Right cardiac atrium (tissue), 5 donors: ENCODE measurements at regions of chr4 and their contacts with region 1.

Region 1: GRCh38 chr4:47463235-47463956 is at the start of gene COMMD8:
- DNase-seq: peak; percentile 98 to 99 (median 98)
- ATAC-seq: peak; percentile 99 to 100
- H3K4me3 ChIP-seq: peak within 1 kb of the TSS; percentile 80
- H3K27ac ChIP-seq: peak within 1 kb of the TSS; percentile 69
- H3K4me1 ChIP-seq: no peaks in the 10 kb centered on the region
- H3K27me3 ChIP-seq: no peaks in the 10 kb centered on the region
- total RNA-seq, gene COMMD8: 13.9 to 20.0 (median 15.6) TPM

Region 2: DNA sequence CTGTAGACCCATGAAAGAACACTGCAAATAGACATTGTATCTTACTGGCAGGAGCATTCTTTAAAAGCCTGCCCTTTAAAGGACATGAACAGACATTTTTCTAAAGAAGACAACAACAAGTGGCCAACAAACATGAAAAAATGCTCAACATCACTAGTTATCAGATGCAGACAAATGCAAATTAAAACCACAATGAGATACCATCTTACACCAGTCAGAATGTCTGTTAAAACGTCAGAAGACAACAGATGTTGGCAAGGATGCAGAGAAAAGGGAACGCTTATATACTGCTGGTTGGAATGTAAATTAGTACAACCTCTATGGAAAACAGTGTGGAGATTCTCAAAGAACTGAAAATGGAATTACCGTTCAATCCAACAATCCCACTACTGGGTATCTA is 98.9 kb after region 1 on chr4:
- intact Hi-C with region 1: loop called in 1 of 4 experiments (anchors 10 kb)
- DNase-seq: no peak
- ATAC-seq: no peak
- H3K4me3 ChIP-seq: no peak overlapping the region
- H3K27ac ChIP-seq: no peak overlapping the region
- H3K4me1 ChIP-seq: no peaks in the 10 kb centered on the region
- H3K27me3 ChIP-seq: no peaks in the 10 kb centered on the region

Region 3: GRCh38 chr4:47577779-47578553 is 114.6 kb after region 1 on chr4:
- intact Hi-C with region 1: no loop called
- DNase-seq: no peak
- ATAC-seq: peak; percentile 93 to 97
- H3K4me3 ChIP-seq: no peak overlapping the region
- H3K27ac ChIP-seq: peak overlapping the region; percentile 61
- H3K4me1 ChIP-seq: no peaks in the 10 kb centered on the region
- H3K27me3 ChIP-seq: no peaks in the 10 kb centered on the region

Region 4: GRCh38 chr4:47668810-47669408 is 205.5 kb after region 1 on chr4:
- intact Hi-C with region 1: no loop called
- DNase-seq: no peak
- ATAC-seq: peak; percentile 72 to 73
- H3K4me3 ChIP-seq: no peak overlapping the region
- H3K27ac ChIP-seq: no peak overlapping the region
- H3K4me1 ChIP-seq: no peaks in the 10 kb centered on the region
- H3K27me3 ChIP-seq: no peaks in the 10 kb centered on the region

Region 5: DNA sequence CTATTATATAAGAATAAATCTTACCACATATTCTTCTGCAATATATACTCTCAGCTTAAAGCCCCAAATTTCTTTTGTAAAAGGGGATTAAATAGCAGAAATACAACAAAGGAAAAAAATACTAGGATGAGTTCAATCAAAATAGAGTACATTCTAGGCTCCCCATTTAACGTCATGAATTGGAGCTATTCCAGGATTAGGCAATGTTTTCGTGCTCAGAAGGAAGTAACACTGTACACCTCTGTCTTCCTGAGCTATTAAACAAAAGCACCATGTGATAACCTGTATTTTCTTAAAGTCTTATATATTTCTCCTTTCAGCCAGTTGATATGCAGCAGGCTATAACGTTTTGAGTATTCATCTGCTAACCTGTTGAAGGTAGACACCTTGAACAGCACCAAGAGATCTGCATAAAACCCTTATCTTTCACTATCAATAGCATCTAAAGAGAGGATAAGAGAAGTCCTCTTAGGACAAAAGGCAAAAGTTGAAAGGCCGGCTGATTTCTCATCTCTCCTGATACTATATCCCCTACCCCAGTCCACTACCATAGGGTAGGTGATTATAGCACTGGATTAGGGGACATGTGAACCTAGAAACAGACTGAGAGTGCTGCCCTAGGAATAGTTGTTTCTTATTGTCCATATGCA is 774.7 kb after region 1 on chr4:
- intact Hi-C with region 1: no loop called
- DNase-seq: no peak
- ATAC-seq: peak in 1 of 2 donors; percentile 67
- H3K4me3 ChIP-seq: no peak overlapping the region
- H3K27ac ChIP-seq: no peak overlapping the region
- H3K4me1 ChIP-seq: no peaks in the 10 kb centered on the region
- H3K27me3 ChIP-seq: no peaks in the 10 kb centered on the region